Ovary (tissue), 10 donors: ENCODE measurements at regions of chr3 and their contacts with region 1.

Region 1: GRCh38 chr3:156033428-156033827 is 87.0 kb upstream of the KCNAB1 start:
- DNase-seq: no peak
- H3K4me3 ChIP-seq: no peak overlapping the region
- H3K27ac ChIP-seq: no peak overlapping the region
- H3K4me1 ChIP-seq: no peaks in the 10 kb centered on the region
- H3K27me3 ChIP-seq: no peaks in the 10 kb centered on the region
- CTCF ChIP-seq: no peak
- EP300 ChIP-seq: no peak
- POLR2A ChIP-seq: no peak

Region 2: GRCh38 chr3:155560594-155560993 is 472.8 kb before region 1 on chr3:
- intact Hi-C with region 1: loop called in 1 of 4 experiments (anchors 5 kb)
- DNase-seq: no peak
- H3K4me3 ChIP-seq: no peak overlapping the region
- H3K27ac ChIP-seq: no peak overlapping the region
- H3K4me1 ChIP-seq: no peaks in the 10 kb centered on the region
- H3K27me3 ChIP-seq: no peaks in the 10 kb centered on the region
- CTCF ChIP-seq: no peak
- EP300 ChIP-seq: no peak
- POLR2A ChIP-seq: no peak